Panc1 (cell line): ENCODE measurements at regions of chr2 and their contacts with region 1.

Region 1: DNA sequence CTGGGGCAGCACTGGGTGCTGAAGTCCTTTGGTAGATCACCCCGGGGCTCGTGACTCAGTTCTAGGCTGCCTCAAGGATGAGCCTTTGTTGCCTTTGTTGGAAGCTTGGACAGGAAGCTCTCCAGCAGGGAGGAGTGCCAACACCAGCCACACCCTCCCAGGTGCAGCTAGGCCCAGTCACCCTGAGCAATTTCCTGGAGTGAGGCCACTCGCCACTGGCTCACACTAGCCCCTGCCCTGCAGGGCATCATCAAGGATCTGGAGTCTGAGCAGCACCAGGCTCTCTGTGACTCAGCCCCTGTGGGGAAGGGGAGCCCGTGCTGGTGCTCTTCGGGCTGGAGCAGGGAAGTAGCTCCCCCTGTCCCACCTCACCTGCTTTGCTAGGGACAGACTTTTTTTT is 6.7 kb upstream of the SDC1 start:
- DNase-seq: peak; percentile 96
- ATAC-seq: peak; percentile 84
- H3K4me3 ChIP-seq: peak overlapping the region in 1 of 2 experiments; percentile 26; a peak in 2 of 4 replicates
- H3K27ac ChIP-seq: no peak overlapping the region
- H3K4me1 ChIP-seq: peaks cover 3% of the 10 kb centered on the region; the same call in 1 of the 2 replicates
- H3K27me3 ChIP-seq: no peaks in the 10 kb centered on the region
- CTCF ChIP-seq: no peak

Region 2: DNA sequence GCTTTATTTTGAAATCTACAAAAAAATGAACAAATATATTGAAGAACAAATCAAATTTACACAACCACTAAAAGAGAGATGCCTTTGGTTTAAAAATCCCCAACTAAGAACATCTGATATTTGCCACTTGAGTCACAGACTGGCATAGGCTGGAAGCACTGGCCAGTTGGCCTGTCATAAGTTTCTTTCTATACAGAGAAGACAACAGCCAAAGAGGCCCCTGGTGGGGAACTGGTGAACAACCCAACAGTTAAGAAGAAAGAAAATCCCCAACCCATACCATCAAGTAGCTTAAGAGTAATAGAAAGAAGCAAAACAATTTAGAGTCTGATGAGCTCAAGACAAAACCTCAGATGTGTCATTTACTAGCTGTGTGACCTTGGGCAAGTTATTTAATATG is 918.7 kb before region 1 on chr2:
- CTCF ChIA-PET with region 1: no interaction called
- POLR2A ChIA-PET with region 1: no interaction called
- in situ Hi-C with region 1: no loop called
- intact Hi-C with region 1: no loop called
- DNase-seq: peak; percentile 5
- ATAC-seq: no peak
- H3K4me3 ChIP-seq: no peak overlapping the region
- H3K27ac ChIP-seq: no peak overlapping the region
- H3K4me1 ChIP-seq: no peaks in the 10 kb centered on the region
- H3K27me3 ChIP-seq: no peaks in the 10 kb centered on the region
- CTCF ChIP-seq: peak; percentile 36; the same call in 1 of the 2 replicates

Region 3: GRCh38 chr2:20135631-20136050 is 96.0 kb before region 1 on chr2:
- CTCF ChIA-PET with region 1: interaction called, 11 read pairs
- POLR2A ChIA-PET with region 1: no interaction called
- in situ Hi-C with region 1: no loop called
- intact Hi-C with region 1: no loop called
- DNase-seq: peak; percentile 45
- ATAC-seq: peak; percentile 85
- H3K4me3 ChIP-seq: no peak overlapping the region
- H3K27ac ChIP-seq: no peak overlapping the region
- H3K4me1 ChIP-seq: no peaks in the 10 kb centered on the region
- H3K27me3 ChIP-seq: no peaks in the 10 kb centered on the region; the same call in 1 of the 2 replicates
- CTCF ChIP-seq: peak; percentile 92

Region 4: GRCh38 chr2:20177556-20178248 is 53.9 kb before region 1 on chr2:
- CTCF ChIA-PET with region 1: interaction called, 10 read pairs
- POLR2A ChIA-PET with region 1: no interaction called
- in situ Hi-C with region 1: no loop called
- intact Hi-C with region 1: no loop called
- DNase-seq: no peak
- ATAC-seq: no peak
- H3K4me3 ChIP-seq: no peak overlapping the region
- H3K27ac ChIP-seq: no peak overlapping the region
- H3K4me1 ChIP-seq: no peaks in the 10 kb centered on the region
- H3K27me3 ChIP-seq: no peaks in the 10 kb centered on the region
- CTCF ChIP-seq: no peak

Region 5: DNA sequence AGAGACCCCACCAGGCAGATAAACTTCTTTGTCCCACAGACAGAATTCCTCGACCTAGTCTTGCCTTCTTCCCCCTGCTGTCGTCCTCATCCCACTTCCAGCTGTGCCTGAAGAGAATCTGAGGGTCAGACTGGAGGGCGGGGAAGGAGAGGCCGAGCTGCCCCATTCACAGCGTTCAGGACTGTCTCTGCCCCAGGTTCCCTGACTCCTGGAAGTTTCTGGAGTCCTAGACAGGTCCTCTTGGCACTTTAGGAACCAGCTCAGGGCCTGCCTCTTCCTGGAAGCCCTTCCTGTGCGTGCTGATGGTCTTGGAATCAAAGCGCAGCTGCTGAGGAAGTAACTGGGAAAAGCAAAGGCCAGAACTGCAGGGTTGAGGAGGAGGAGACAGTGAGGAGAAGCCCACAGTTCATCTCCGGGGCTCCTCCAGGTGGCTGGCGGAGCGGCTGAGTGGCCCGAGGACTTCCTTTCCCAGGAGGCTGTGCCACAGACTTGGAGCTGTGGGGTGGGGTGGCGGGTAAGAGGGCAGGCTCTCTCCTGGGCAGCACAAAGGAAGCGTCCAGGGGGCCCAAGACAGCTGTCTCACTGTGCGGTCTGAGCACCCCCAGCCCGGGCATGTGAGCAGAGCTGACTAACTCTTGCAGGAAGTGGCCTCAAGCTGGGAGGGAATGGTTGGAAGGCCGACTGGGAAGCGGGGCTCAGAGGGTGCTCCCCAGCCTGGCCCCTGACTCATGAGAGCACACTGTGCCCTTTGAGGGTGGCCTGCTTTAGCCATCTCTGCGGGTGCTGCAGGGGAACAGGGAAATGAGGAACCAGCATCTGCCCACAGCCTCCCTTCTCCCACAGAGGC is 46.2 kb before region 1 on chr2:
- CTCF ChIA-PET with region 1: no interaction called
- POLR2A ChIA-PET with region 1: interaction called, 12 read pairs
- in situ Hi-C with region 1: no loop called
- intact Hi-C with region 1: no loop called
- DNase-seq: no peak
- ATAC-seq: peak; percentile 15; the same call in 1 of the 2 replicates
- H3K4me3 ChIP-seq: no peak overlapping the region
- H3K27ac ChIP-seq: peak overlapping the region; percentile 42; the same call in 1 of the 2 replicates
- H3K4me1 ChIP-seq: peaks cover 30% of the 10 kb centered on the region
- H3K27me3 ChIP-seq: no peaks in the 10 kb centered on the region
- CTCF ChIP-seq: no peak

Region 6: DNA sequence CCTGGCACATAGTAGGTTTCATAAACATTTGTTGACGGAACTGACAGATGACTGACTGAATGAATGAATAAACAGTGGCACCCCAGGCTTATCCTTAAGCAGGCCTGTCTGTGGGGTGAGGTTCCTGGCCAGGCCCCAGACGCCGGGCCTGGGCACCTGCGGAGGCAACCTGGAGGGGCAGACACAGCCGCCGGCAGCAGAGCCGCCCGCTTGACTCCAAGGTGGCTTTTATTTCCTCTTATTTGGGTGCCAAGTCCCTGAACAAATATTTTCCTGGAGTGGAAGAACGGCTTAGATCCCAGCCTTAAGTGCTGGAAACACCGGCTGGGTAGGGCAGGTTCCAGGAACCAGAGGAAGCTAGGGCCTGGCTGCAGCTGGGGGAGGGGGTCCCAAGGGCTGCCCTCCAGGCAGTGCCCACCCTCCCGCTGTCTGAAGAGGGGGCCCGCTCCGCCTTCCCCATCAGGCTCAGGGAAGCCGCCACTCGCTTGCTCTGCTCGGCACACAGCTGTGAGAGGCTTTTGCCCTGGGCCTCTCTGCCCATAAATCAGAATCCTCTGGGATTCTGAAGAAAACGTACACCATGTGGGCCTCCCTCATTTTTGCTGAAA is 35.0 kb before region 1 on chr2:
- CTCF ChIA-PET with region 1: no interaction called
- POLR2A ChIA-PET with region 1: no interaction called
- in situ Hi-C with region 1: no loop called
- intact Hi-C with region 1: no loop called
- DNase-seq: no peak
- ATAC-seq: no peak
- H3K4me3 ChIP-seq: no peak overlapping the region
- H3K27ac ChIP-seq: no peak overlapping the region
- H3K4me1 ChIP-seq: no peaks in the 10 kb centered on the region
- H3K27me3 ChIP-seq: no peaks in the 10 kb centered on the region
- CTCF ChIP-seq: no peak